H1 (cell line): ENCODE measurements at regions of chr19 and their contacts with region 1.

Region 1: GRCh38 chr19:11987405-11988281 is 22.8 kb downstream of the ZNF763 start:
- DNase-seq: peak; percentile 90 to 96
- H3K4me3 ChIP-seq: peak overlapping the region; percentile 82 to 99 (median 98)
- H3K27ac ChIP-seq: peak overlapping the region; percentile 77
- H3K4me1 ChIP-seq: peaks cover 0 to 5% (median 0%) of the 10 kb centered on the region in 4 experiments; a peak in 4 of 7 replicates
- H3K27me3 ChIP-seq: no peaks in the 10 kb centered on the region
- CTCF ChIP-seq: no peak
- EP300 ChIP-seq: no peak
- POLR2A ChIP-seq: peak; percentile 95 to 96
- RAD21 ChIP-seq: no peak

Region 2: DNA sequence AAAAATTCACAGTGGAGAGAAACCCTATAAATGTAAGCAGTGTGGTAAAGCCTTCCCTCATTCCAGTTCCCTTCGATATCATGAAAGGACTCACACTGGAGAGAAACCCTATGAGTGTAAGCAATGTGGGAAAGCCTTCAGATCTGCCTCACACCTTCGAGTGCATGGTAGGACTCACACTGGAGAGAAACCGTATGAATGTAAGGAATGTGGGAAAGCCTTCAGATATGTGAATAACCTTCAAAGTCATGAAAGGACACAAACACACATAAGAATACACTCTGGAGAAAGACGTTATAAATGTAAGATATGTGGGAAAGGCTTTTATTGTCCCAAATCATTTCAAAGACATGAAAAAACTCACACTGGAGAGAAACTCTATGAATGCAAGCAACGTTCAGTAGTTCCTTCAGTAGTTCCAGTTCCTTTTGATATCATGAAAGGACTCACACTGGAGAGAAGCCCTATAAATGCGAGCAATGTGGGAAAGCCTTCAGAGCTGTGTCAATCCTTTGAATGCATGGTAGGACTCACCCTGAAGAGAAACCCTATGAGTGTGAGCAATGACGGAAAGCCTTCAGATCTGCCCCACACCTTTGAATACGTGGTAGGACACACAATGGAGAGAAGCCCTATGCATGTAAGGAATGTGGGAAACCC is 155.3 kb before region 1 on chr19:
- CTCF ChIA-PET with region 1: no interaction called
- POLR2A ChIA-PET with region 1: no interaction called
- DNase-seq: no peak
- H3K4me3 ChIP-seq: no peak overlapping the region
- H3K27ac ChIP-seq: no peak overlapping the region
- H3K4me1 ChIP-seq: no peaks in the 10 kb centered on the region
- H3K27me3 ChIP-seq: no peaks in the 10 kb centered on the region
- CTCF ChIP-seq: no peak
- EP300 ChIP-seq: no peak
- POLR2A ChIP-seq: no peak
- RAD21 ChIP-seq: no peak

Region 3: GRCh38 chr19:11924886-11925650 is 62.6 kb before region 1 on chr19 and contains the start of gene ZNF700:
- CTCF ChIA-PET with region 1: interaction called, 144 read pairs
- POLR2A ChIA-PET with region 1: interaction called, 45 read pairs
- DNase-seq: peak; percentile 56 to 95
- H3K4me3 ChIP-seq: peak within 1 kb of the TSS; percentile 65 to 82 (median 76)
- H3K27ac ChIP-seq: peak within 1 kb of the TSS; percentile 95
- H3K4me1 ChIP-seq: peaks cover 0 to 3% (median 3%) of the 10 kb centered on the region in 4 experiments; a peak in 4 of 7 replicates
- H3K27me3 ChIP-seq: 0 out of 7 replicates have a peak, but pooled peaks cover 0 to 3% (median 0%) of the 10 kb centered on the region in 4 experiments
- CTCF ChIP-seq: no peak
- EP300 ChIP-seq: 0 out of 3 replicates have a peak, but pooled peaks of 1 of the 2 experiments have one; percentile 17
- POLR2A ChIP-seq: peak; percentile 91 to 98
- RAD21 ChIP-seq: no peak
- total RNA-seq, gene ZNF700: 9.4 and 10.5 TPM in 2 replicates

Region 4: GRCh38 chr19:11949201-11949600 is 38.4 kb before region 1 on chr19:
- CTCF ChIA-PET with region 1: no interaction called
- POLR2A ChIA-PET with region 1: no interaction called
- DNase-seq: no peak
- H3K4me3 ChIP-seq: no peak overlapping the region
- H3K27ac ChIP-seq: no peak overlapping the region
- H3K4me1 ChIP-seq: no peaks in the 10 kb centered on the region
- H3K27me3 ChIP-seq: no peaks in the 10 kb centered on the region
- CTCF ChIP-seq: no peak
- EP300 ChIP-seq: no peak
- POLR2A ChIP-seq: no peak
- RAD21 ChIP-seq: no peak

Region 5: DNA sequence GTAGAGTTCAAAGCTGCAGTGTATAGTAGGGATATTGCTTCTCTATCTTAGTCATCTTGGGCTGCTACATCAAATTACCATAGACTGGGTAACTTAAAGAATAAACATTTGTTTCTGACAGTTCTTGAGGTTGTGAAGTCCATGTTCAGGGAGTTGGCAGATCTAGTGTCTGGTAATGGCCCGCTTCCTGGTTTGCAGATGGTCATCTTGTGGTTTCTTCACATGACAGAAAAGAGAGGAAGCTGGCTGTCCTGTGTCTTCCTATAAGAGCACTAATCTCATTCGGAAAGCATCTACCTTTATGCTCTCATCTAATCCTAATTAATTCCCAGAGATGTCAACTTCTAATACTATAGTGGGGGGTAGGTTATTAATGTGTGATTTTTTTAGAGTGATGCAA is 16.6 kb before region 1 on chr19:
- CTCF ChIA-PET with region 1: interaction called, 13 read pairs
- POLR2A ChIA-PET with region 1: interaction called, 8 read pairs
- DNase-seq: no peak
- H3K4me3 ChIP-seq: no peak overlapping the region
- H3K27ac ChIP-seq: no peak overlapping the region
- H3K4me1 ChIP-seq: no peaks in the 10 kb centered on the region
- H3K27me3 ChIP-seq: peaks cover 0 to 8% (median 4%) of the 10 kb centered on the region in 4 experiments; a peak in 5 of 7 replicates
- CTCF ChIP-seq: no peak
- EP300 ChIP-seq: no peak
- POLR2A ChIP-seq: no peak
- RAD21 ChIP-seq: no peak

Region 6: GRCh38 chr19:12035220-12036153 is 47.8 kb after region 1 on chr19 and contains the start of gene ZNF433:
- CTCF ChIA-PET with region 1: interaction called, 14 read pairs
- POLR2A ChIA-PET with region 1: interaction called, 27 read pairs
- DNase-seq: peak; percentile 76 to 99
- H3K4me3 ChIP-seq: peak within 1 kb of the TSS; percentile 58 to 81 (median 80)
- H3K27ac ChIP-seq: peak within 1 kb of the TSS; percentile 76; the same call in 1 of the 2 replicates
- H3K4me1 ChIP-seq: peaks cover 0 to 4% (median 2%) of the 10 kb centered on the region in 4 experiments; a peak in 3 of 7 replicates
- H3K27me3 ChIP-seq: peaks cover 0 to 7% (median 2%) of the 10 kb centered on the region in 4 experiments; a peak in 3 of 7 replicates
- CTCF ChIP-seq: peak in 1 of 3 experiments; percentile 11; a peak in 1 of 4 replicates
- EP300 ChIP-seq: peak in 1 of 2 experiments; percentile 69; a peak in 1 of 3 replicates
- POLR2A ChIP-seq: peak in 1 of 2 experiments; percentile 80; a peak in 2 of 3 replicates
- RAD21 ChIP-seq: no peak
- total RNA-seq, gene ZNF433: 1.4 and 1.8 TPM in 2 replicates

Region 7: GRCh38 chr19:12064590-12065538 is 77.2 kb after region 1 on chr19 and contains the start of gene ZNF844:
- CTCF ChIA-PET with region 1: interaction called, 19 read pairs
- POLR2A ChIA-PET with region 1: interaction called, 22 read pairs
- DNase-seq: peak; percentile 75 to 99
- H3K4me3 ChIP-seq: peak within 1 kb of the TSS; percentile 62 to 82 (median 73)
- H3K27ac ChIP-seq: peak within 1 kb of the TSS; percentile 94
- H3K4me1 ChIP-seq: peaks cover 2 to 8% (median 4%) of the 10 kb centered on the region in 4 experiments; a peak in 6 of 7 replicates
- H3K27me3 ChIP-seq: no peaks in the 10 kb centered on the region
- CTCF ChIP-seq: no peak
- EP300 ChIP-seq: peak; percentile 15 to 31; a peak in 2 of 3 replicates
- POLR2A ChIP-seq: peak; percentile 87 to 99
- RAD21 ChIP-seq: no peak
- total RNA-seq, gene ZNF844: 9.4 and 9.8 TPM in 2 replicates

Region 8: GRCh38 chr19:12139885-12140547 is 152.4 kb after region 1 on chr19 and contains the start of gene ZNF20:
- CTCF ChIA-PET with region 1: interaction called, 20 read pairs
- POLR2A ChIA-PET with region 1: interaction called, 26 read pairs
- DNase-seq: peak; percentile 92 to 98
- H3K4me3 ChIP-seq: peak within 1 kb of the TSS; percentile 68 to 94 (median 90)
- H3K27ac ChIP-seq: peak within 1 kb of the TSS; percentile 95
- H3K4me1 ChIP-seq: peaks cover 2 to 10% (median 6%) of the 10 kb centered on the region in 4 experiments; a peak in 6 of 7 replicates
- H3K27me3 ChIP-seq: no peaks in the 10 kb centered on the region
- CTCF ChIP-seq: no peak
- EP300 ChIP-seq: no peak
- POLR2A ChIP-seq: peak; percentile 61 to 89
- RAD21 ChIP-seq: 0 out of 4 replicates have a peak, but pooled peaks of 1 of the 2 experiments have one; percentile 0
- total RNA-seq, gene ZNF20: 7.4 and 9.0 TPM in 2 replicates